ENCODE measurements at regions of chr14 and their contacts with region 1.

Region 1: GRCh38 chr14:32430326-32430725 is 101.2 kb downstream of the AKAP6 start:
- DNase-seq: no peak
- H3K4me3 ChIP-seq: no peak overlapping the region
- H3K27ac ChIP-seq: no peak overlapping the region
- H3K4me1 ChIP-seq: no peaks in the 10 kb centered on the region
- H3K27me3 ChIP-seq: no peaks in the 10 kb centered on the region
- CTCF ChIP-seq: no peak
- POLR2A ChIP-seq: no peak

Region 2: GRCh38 chr14:31768355-31768754 is 662.0 kb before region 1 on chr14:
- intact Hi-C with region 1: loop called (anchors 5 kb)
- DNase-seq: no peak
- H3K4me3 ChIP-seq: no peak overlapping the region
- H3K27ac ChIP-seq: no peak overlapping the region
- H3K4me1 ChIP-seq: no peaks in the 10 kb centered on the region
- H3K27me3 ChIP-seq: no peaks in the 10 kb centered on the region
- CTCF ChIP-seq: no peak
- POLR2A ChIP-seq: no peak

Region 3: DNA sequence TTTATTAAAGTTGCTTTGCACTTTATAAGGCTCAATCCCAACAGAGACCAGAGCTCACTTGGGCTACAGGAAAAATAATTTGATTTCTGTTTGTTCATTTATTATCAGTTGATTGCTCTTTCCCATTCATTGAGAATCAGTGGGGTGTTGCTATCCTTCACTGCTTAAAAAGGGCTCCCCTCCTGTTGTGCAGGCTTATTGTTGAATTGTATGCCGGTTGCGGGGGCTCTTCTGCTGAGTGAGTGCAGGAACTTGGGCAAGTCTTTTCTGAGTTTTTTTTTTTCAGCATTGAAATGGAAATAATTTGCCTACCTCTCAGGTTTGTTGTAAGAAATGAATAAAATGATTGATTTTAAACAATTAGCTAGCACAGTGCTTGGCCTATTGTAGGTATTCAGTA is 68.7 kb before region 1 on chr14:
- intact Hi-C with region 1: no loop called
- DNase-seq: no peak
- H3K4me3 ChIP-seq: no peak overlapping the region
- H3K27ac ChIP-seq: no peak overlapping the region
- H3K4me1 ChIP-seq: peaks cover 0 to 8% of the 10 kb centered on the region in 2 donors
- H3K27me3 ChIP-seq: no peaks in the 10 kb centered on the region
- CTCF ChIP-seq: no peak
- POLR2A ChIP-seq: no peak

Region 4: GRCh38 chr14:32372154-32372553 is 58.2 kb before region 1 on chr14:
- intact Hi-C with region 1: no loop called
- DNase-seq: no peak
- H3K4me3 ChIP-seq: no peak overlapping the region
- H3K27ac ChIP-seq: no peak overlapping the region
- H3K4me1 ChIP-seq: no peaks in the 10 kb centered on the region
- H3K27me3 ChIP-seq: no peaks in the 10 kb centered on the region
- CTCF ChIP-seq: no peak
- POLR2A ChIP-seq: no peak